H1 (cell line): ENCODE measurements at regions of chr9 and their contacts with region 1.

Region 1: GRCh38 chr9:7234143-7234542 is 476.4 kb downstream of the KDM4C start:
- DNase-seq: peak; percentile 57 to 91
- H3K4me3 ChIP-seq: no peak overlapping the region
- H3K27ac ChIP-seq: no peak overlapping the region
- H3K4me1 ChIP-seq: peaks cover 0 to 4% (median 0%) of the 10 kb centered on the region in 4 experiments; a peak in 4 of 7 replicates
- H3K27me3 ChIP-seq: no peaks in the 10 kb centered on the region
- CTCF ChIP-seq: peak; percentile 52 to 99 (median 91)
- EP300 ChIP-seq: no peak
- POLR2A ChIP-seq: no peak
- RAD21 ChIP-seq: peak; percentile 72 to 81

Region 2: GRCh38 chr9:7008411-7008810 is 225.7 kb before region 1 on chr9:
- CTCF ChIA-PET with region 1: no interaction called
- POLR2A ChIA-PET with region 1: no interaction called
- DNase-seq: no peak
- H3K4me3 ChIP-seq: no peak overlapping the region
- H3K27ac ChIP-seq: no peak overlapping the region
- H3K4me1 ChIP-seq: no peaks in the 10 kb centered on the region; a peak in 1 of 7 replicates
- H3K27me3 ChIP-seq: no peaks in the 10 kb centered on the region
- CTCF ChIP-seq: no peak
- EP300 ChIP-seq: no peak
- POLR2A ChIP-seq: no peak
- RAD21 ChIP-seq: no peak

Region 3: DNA sequence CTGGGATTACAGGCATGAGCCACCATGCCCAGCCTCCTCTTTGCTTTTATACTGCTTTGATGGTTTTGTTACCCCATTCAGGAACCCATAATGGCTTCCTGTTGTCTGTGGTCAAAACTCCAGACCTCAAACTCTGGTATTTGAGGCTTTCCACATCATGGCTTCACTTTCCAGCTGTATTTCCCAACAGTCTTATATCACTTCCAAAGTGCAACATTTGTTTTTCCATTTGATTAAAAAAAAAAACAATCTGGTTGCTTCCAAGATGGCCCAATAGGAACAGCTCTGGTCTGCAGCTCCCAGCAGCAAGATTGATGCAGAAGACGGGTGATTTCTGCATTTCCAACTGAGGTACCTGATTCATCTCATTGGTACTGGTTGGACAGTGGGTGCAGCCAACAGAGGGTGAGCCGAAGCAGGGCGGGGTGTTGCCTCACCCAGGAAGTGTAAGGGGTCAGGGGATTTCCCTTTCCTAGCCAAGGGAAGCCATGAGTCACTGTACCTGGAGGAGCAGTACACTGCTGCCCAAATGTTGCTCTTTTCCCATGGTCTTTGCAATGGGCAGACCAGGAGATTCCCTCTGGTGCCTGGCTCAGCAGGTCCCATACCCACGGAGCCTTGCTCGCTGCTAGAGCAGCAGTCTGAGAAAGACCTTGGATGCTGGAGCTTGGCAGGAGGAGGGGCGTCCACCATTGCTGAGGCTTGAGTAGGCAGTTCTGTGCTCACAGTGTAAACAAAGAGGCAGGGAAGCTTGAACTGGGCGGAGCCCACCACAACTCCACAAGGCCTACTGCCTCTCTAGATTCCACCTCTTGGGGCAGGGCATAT is 17.9 kb before region 1 on chr9:
- CTCF ChIA-PET with region 1: interaction called, 15 read pairs
- POLR2A ChIA-PET with region 1: no interaction called
- DNase-seq: no peak
- H3K4me3 ChIP-seq: no peak overlapping the region
- H3K27ac ChIP-seq: no peak overlapping the region
- H3K4me1 ChIP-seq: peaks cover 1 to 10% (median 5%) of the 10 kb centered on the region in 4 experiments; a peak in 5 of 7 replicates
- H3K27me3 ChIP-seq: no peaks in the 10 kb centered on the region; a peak in 2 of 7 replicates
- CTCF ChIP-seq: no peak
- EP300 ChIP-seq: no peak
- POLR2A ChIP-seq: no peak
- RAD21 ChIP-seq: no peak

Region 4: GRCh38 chr9:7246917-7247522 is 12.9 kb after region 1 on chr9:
- CTCF ChIA-PET with region 1: interaction called, 24 read pairs
- POLR2A ChIA-PET with region 1: no interaction called
- DNase-seq: no peak
- H3K4me3 ChIP-seq: no peak overlapping the region
- H3K27ac ChIP-seq: no peak overlapping the region
- H3K4me1 ChIP-seq: peaks cover 0 to 2% (median under 1%) of the 10 kb centered on the region in 4 experiments; a peak in 1 of 7 replicates
- H3K27me3 ChIP-seq: no peaks in the 10 kb centered on the region
- CTCF ChIP-seq: no peak
- EP300 ChIP-seq: no peak
- POLR2A ChIP-seq: no peak
- RAD21 ChIP-seq: no peak

Region 5: GRCh38 chr9:7316166-7316795 is 82.1 kb after region 1 on chr9:
- CTCF ChIA-PET with region 1: interaction called, 12 read pairs
- POLR2A ChIA-PET with region 1: no interaction called
- DNase-seq: no peak
- H3K4me3 ChIP-seq: no peak overlapping the region
- H3K27ac ChIP-seq: no peak overlapping the region
- H3K4me1 ChIP-seq: peaks cover 0 to 5% (median 0%) of the 10 kb centered on the region in 4 experiments; a peak in 3 of 7 replicates
- H3K27me3 ChIP-seq: no peaks in the 10 kb centered on the region
- CTCF ChIP-seq: no peak
- EP300 ChIP-seq: no peak
- POLR2A ChIP-seq: no peak
- RAD21 ChIP-seq: no peak

Region 6: DNA sequence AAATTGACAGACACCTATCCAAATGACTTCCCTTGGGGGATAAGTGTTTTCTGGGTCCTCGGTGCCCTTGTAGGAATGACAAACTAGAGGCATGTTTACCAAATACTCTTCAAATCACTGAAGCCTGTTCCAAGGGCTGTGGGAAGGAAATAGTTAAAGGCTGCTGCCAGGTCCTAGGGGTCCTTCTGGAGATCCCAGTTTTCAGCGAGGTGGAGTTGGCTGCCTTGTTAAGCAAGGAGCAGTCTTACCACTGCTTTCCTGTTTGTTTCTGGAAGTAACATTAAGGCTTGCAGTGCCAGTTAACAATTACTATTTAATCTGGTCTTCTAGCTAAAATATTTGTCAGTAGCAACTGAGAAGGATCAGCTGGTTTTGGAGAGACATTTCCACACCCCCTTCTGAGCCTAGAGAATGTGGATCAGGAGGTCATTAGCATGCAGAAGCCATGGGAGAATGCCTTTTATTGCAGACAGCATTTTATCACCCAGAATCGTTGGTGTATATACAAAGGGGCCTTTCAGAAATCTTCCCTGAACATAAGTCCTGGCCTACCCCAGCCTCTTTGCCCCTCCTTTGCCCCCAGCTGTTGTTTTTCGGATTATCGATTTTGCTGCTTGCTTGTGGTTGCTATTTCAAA is 326.6 kb after region 1 on chr9:
- CTCF ChIA-PET with region 1: no interaction called
- POLR2A ChIA-PET with region 1: no interaction called
- DNase-seq: no peak
- H3K4me3 ChIP-seq: no peak overlapping the region; a peak in 1 of 8 replicates
- H3K27ac ChIP-seq: no peak overlapping the region
- H3K4me1 ChIP-seq: peaks cover 0 to 2% (median 0%) of the 10 kb centered on the region in 4 experiments; a peak in 2 of 7 replicates
- H3K27me3 ChIP-seq: no peaks in the 10 kb centered on the region
- CTCF ChIP-seq: no peak
- EP300 ChIP-seq: no peak
- POLR2A ChIP-seq: no peak
- RAD21 ChIP-seq: no peak; a peak in 1 of 4 replicates

Region 7: GRCh38 chr9:8374471-8374870 is 1140.3 kb after region 1 on chr9:
- CTCF ChIA-PET with region 1: no interaction called
- POLR2A ChIA-PET with region 1: no interaction called
- DNase-seq: no peak
- H3K4me3 ChIP-seq: no peak overlapping the region
- H3K27ac ChIP-seq: no peak overlapping the region
- H3K4me1 ChIP-seq: no peaks in the 10 kb centered on the region
- H3K27me3 ChIP-seq: no peaks in the 10 kb centered on the region
- CTCF ChIP-seq: no peak
- EP300 ChIP-seq: no peak
- POLR2A ChIP-seq: no peak
- RAD21 ChIP-seq: no peak